ENCODE measurements at regions of chr5 and their contacts with region 1.

Region 1: DNA sequence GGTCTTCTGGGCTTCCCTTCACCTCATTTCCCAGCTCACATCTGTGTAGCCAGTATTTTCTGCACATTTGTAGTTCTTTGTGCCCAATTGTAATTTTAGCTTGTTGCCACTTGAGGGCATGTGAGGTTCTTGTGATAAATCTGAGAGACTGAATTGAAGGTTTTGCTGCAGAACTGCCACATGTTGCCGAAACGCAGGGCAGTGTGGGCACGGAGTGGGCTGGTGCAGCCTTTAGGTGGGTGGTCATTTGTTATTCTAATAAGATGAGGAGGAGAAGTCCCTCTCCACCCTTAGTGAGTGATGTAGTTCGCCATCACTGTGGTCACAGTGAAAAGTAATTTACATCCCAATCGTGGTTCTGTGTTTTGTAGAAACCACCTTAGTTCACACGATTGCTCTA is 21.2 kb downstream of the OTULIN start:
- DNase-seq: peak; percentile 33
- ATAC-seq: peak; percentile 78
- H3K4me3 Mint-ChIP-seq: no peak overlapping the region
- H3K27ac Mint-ChIP-seq: 0 out of 2 replicates have a peak overlapping the region, but pooled peaks have one; percentile 57
- H3K4me1 Mint-ChIP-seq: peaks cover 6% of the 10 kb centered on the region
- H3K27me3 Mint-ChIP-seq: no peaks in the 10 kb centered on the region
- CTCF ChIP-seq: peak; percentile 33

Region 2: DNA sequence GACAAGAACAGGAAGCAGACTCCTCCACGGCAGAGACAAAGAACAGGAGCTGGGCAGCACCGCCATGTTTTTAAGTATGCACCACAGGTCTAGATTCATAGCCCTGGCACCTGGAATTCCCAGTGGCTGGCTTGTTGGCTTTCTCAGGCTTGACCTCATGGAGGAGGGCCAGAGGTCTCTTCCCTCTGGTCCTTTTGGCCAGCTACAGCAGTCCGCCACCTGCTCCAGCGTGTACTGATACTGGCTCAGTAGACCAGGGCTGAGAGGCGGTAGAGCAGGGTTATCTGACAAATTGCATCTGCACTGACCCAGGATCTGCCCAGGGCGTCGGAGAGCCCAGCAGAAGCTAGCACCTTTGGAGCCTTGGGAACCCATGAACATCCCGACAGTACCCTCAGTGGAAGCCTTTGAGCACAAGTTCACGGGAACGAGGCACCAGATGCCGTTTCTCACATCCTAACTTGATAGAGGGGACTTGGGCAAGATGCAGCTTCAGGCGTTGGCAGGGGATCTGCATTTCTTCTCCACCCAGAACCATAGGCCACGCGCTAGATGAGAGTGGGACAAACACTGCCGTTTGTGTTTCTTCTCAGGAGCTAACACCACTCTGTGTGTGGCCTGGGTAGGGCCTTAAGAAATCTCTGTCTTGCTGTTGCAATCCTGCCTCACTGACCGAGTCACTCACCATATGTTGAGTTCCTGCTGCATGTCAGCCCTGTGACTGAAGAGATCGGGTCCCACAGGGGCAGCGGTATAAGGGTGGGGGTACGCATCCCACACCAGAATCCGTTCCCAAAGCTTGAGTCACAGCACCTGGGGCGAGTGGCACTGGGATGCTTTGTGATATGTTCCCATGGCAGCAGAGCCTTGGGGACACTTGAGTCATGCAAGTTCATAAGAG is 194.5 kb before region 1 on chr5:
- CTCF ChIA-PET with region 1: no interaction called
- POLR2A ChIA-PET with region 1: no interaction called
- DNase-seq: no peak
- ATAC-seq: no peak
- H3K4me3 Mint-ChIP-seq: no peak overlapping the region
- H3K27ac Mint-ChIP-seq: no peak overlapping the region; the same call in 1 of the 2 replicates
- H3K4me1 Mint-ChIP-seq: peaks cover 5% of the 10 kb centered on the region
- H3K27me3 Mint-ChIP-seq: no peaks in the 10 kb centered on the region
- CTCF ChIP-seq: no peak

Region 3: GRCh38 chr5:14674983-14675854 is 10.5 kb before region 1 on chr5:
- CTCF ChIA-PET with region 1: interaction called, 13 read pairs
- POLR2A ChIA-PET with region 1: no interaction called
- DNase-seq: no peak
- ATAC-seq: no peak
- H3K4me3 Mint-ChIP-seq: no peak overlapping the region
- H3K27ac Mint-ChIP-seq: no peak overlapping the region
- H3K4me1 Mint-ChIP-seq: peaks cover 48% of the 10 kb centered on the region
- H3K27me3 Mint-ChIP-seq: no peaks in the 10 kb centered on the region
- CTCF ChIP-seq: no peak

Region 4: GRCh38 chr5:14727428-14727865 is 41.7 kb after region 1 on chr5:
- CTCF ChIA-PET with region 1: interaction called, 26 read pairs
- POLR2A ChIA-PET with region 1: interaction called, 3 read pairs
- DNase-seq: peak; percentile 82
- ATAC-seq: peak; percentile 8
- H3K4me3 Mint-ChIP-seq: no peak overlapping the region
- H3K27ac Mint-ChIP-seq: peak overlapping the region; percentile 69; the same call in 1 of the 2 replicates
- H3K4me1 Mint-ChIP-seq: peaks cover 36% of the 10 kb centered on the region
- H3K27me3 Mint-ChIP-seq: no peaks in the 10 kb centered on the region; the same call in 1 of the 2 replicates
- CTCF ChIP-seq: peak; percentile 77

Region 5: GRCh38 chr5:15003511-15003920 is 317.8 kb after region 1 on chr5:
- CTCF ChIA-PET with region 1: interaction called, 28 read pairs
- POLR2A ChIA-PET with region 1: no interaction called
- DNase-seq: peak; percentile 36
- ATAC-seq: peak; percentile 88
- H3K4me3 Mint-ChIP-seq: no peak overlapping the region
- H3K27ac Mint-ChIP-seq: no peak overlapping the region
- H3K4me1 Mint-ChIP-seq: peaks cover 3% of the 10 kb centered on the region
- H3K27me3 Mint-ChIP-seq: no peaks in the 10 kb centered on the region; the same call in 1 of the 2 replicates
- CTCF ChIP-seq: peak; percentile 44; the same call in 1 of the 2 replicates

Measured in WTC11 (cell line).